ENCODE measurements at regions of chr2 and their contacts with region 1.

Region 1: DNA sequence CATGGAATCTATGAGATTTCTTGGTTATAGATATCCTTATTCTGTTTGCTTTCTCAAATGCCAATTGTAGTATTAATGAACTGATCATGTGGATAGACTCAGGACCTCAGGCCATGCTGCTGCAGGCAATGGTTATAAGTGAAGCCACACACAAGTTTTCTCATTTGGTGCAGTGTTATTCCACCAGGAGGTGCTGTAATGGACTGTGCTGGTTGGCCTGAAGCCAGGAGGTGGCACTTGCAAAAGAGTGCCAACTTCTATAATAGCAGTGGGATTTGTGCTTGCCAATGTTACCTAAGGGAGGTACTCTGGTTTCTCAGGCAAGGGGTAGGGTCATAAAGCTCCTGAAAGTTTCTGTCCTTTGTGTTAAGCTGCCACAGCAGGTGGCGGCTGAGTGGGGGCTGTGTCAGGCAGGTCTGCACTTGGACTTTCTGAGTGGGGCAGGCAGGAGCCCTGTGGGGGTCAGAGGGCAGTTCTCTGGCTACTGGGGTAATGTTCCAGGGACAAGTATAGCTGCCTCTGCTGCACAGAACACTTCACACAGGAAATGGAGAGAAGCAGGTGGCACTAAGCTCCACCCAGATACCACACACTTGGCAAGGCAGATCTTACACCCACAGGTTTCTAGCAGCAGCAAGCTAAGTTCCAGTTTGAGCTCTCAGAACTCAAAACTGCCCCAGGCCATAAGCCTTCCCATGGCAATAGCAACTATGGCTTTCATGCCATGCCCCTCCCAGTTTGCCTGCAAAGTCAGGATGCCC is 352.6 kb upstream of the CWC22 start:
- DNase-seq: no peak
- ATAC-seq: peak; percentile 95
- H3K4me3 Mint-ChIP-seq: peak overlapping the region; percentile 42
- H3K27ac Mint-ChIP-seq: peak overlapping the region; percentile 84
- H3K4me1 Mint-ChIP-seq: peaks cover 20% of the 10 kb centered on the region
- H3K27me3 Mint-ChIP-seq: no peaks in the 10 kb centered on the region
- CTCF ChIP-seq: no peak

Region 2: GRCh38 chr2:180143633-180144337 is 215.9 kb before region 1 on chr2:
- CTCF ChIA-PET with region 1: no interaction called
- POLR2A ChIA-PET with region 1: no interaction called
- intact Hi-C with region 1: loop called (anchors 5 kb)
- DNase-seq: no peak
- ATAC-seq: no peak
- H3K4me3 Mint-ChIP-seq: no peak overlapping the region
- H3K27ac Mint-ChIP-seq: no peak overlapping the region
- H3K4me1 Mint-ChIP-seq: no peaks in the 10 kb centered on the region
- H3K27me3 Mint-ChIP-seq: peaks cover 7% of the 10 kb centered on the region
- CTCF ChIP-seq: no peak

Region 3: DNA sequence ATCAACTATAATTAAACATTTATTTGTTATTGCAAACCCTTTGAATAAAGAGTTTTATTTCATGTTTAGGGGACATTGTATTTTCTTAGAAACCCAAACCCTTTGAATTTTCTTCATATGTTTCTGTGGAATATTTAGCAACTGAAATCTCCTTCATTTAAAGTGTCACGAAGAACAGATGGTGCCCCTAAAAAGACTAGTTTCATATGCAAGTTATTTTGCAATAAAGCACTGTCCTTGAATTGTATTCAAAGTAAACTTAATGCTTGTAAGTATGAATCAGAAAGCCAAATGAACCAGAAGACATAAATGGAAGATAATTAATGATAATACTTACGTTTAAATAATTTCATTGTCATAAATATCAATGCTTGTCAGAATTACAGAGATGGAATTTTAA is 200.7 kb before region 1 on chr2:
- CTCF ChIA-PET with region 1: no interaction called
- POLR2A ChIA-PET with region 1: no interaction called
- intact Hi-C with region 1: no loop called
- DNase-seq: no peak
- ATAC-seq: no peak
- H3K4me3 Mint-ChIP-seq: no peak overlapping the region
- H3K27ac Mint-ChIP-seq: no peak overlapping the region
- H3K4me1 Mint-ChIP-seq: no peaks in the 10 kb centered on the region
- H3K27me3 Mint-ChIP-seq: no peaks in the 10 kb centered on the region
- CTCF ChIP-seq: no peak

Region 4: GRCh38 chr2:180319586-180320405 is 39.9 kb before region 1 on chr2:
- CTCF ChIA-PET with region 1: no interaction called
- POLR2A ChIA-PET with region 1: no interaction called
- intact Hi-C with region 1: loop called (anchors 5 kb)
- DNase-seq: no peak
- ATAC-seq: peak; percentile 93
- H3K4me3 Mint-ChIP-seq: no peak overlapping the region
- H3K27ac Mint-ChIP-seq: peak overlapping the region; percentile 69
- H3K4me1 Mint-ChIP-seq: peaks cover 16% of the 10 kb centered on the region
- H3K27me3 Mint-ChIP-seq: no peaks in the 10 kb centered on the region
- CTCF ChIP-seq: no peak

Region 5: DNA sequence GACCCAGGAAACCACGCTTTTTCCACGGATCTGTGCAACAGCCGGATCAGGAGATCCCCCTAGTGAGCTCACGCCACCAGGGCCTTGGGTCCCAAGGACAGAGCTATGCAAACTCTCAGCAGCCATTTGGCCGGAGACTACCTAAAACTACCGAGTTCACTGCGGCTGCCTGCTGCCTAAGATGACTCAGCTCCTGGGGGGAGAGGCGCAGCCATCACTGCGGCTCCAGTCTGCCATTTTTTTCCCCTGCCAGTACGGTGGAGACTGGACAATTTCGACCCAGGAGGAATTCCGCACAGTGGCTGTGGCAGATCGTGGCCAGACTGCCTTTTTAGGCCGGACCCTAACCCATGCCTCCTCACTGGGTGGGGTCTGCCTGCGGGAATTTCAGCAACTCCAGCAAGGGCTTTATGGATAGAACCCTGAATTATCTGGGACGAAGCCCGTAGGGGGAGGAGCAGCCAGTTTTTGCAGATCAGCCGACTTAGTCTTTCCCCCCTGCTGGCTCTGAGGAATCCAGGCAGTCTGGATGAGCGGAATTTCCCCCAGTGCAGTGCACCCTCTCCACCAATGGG is 195.8 kb after region 1 on chr2:
- CTCF ChIA-PET with region 1: no interaction called
- POLR2A ChIA-PET with region 1: no interaction called
- intact Hi-C with region 1: no loop called
- DNase-seq: no peak
- ATAC-seq: no peak
- H3K4me3 Mint-ChIP-seq: no peak overlapping the region
- H3K27ac Mint-ChIP-seq: no peak overlapping the region
- H3K4me1 Mint-ChIP-seq: no peaks in the 10 kb centered on the region
- H3K27me3 Mint-ChIP-seq: no peaks in the 10 kb centered on the region
- CTCF ChIP-seq: no peak